Right ventricle myocardium superior (tissue), 1 donor: ENCODE measurements at regions of chr12 and their contacts with region 1.

Region 1: DNA sequence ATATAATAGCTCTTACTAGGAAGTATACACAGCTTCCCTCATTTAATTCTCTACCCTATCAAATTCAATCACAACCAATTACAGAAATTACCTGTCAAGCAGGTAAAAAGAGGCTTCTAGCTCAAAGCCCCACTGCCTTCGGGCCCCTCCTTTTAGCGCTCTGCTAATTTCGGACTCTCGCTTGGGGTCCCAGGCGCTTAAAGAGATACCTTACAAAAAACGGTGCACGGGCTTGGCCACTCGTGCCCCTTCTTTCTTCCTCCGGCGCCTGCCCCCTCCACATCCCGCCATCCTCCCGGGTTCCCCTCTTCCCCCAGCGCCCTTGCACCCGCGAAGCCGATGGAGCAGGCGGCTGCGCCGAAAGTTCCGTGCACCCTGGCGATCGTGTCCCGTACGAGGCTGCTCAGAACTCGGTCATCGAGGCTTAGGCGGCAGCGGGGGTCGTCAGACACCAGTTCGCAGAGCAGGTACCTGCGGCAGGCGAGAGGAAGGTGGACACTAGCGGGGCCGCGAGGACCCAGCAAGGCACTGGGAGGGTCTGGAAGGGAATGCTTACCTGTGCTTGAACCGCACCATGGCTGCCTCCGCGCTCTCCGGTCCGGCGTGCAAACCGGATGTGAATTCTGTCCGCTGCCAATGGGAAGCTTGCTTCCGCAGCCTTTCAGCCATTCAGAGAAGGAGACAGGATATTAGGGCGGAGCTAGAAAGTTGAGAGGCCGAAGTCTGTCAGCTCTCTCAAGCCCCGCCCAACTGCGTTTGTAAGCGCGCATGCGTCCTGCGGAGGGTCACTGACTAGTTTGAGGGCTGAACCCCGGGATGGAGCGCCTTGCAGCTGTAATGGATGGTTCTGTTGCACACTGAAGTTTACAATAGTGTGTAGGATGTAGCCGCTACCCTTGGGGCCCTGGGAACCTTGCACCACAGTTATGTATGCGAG is at the start of gene POP5:
- DNase-seq: peak; percentile 98
- ATAC-seq: peak; percentile 92
- total RNA-seq, gene POP5: 40.9 TPM

Region 2: GRCh38 chr12:120649442-120650232 is 68.6 kb after region 1 on chr12:
- intact Hi-C with region 1: loop called (anchors 5 kb)
- DNase-seq: peak; percentile 63
- ATAC-seq: peak; percentile 9

Region 3: DNA sequence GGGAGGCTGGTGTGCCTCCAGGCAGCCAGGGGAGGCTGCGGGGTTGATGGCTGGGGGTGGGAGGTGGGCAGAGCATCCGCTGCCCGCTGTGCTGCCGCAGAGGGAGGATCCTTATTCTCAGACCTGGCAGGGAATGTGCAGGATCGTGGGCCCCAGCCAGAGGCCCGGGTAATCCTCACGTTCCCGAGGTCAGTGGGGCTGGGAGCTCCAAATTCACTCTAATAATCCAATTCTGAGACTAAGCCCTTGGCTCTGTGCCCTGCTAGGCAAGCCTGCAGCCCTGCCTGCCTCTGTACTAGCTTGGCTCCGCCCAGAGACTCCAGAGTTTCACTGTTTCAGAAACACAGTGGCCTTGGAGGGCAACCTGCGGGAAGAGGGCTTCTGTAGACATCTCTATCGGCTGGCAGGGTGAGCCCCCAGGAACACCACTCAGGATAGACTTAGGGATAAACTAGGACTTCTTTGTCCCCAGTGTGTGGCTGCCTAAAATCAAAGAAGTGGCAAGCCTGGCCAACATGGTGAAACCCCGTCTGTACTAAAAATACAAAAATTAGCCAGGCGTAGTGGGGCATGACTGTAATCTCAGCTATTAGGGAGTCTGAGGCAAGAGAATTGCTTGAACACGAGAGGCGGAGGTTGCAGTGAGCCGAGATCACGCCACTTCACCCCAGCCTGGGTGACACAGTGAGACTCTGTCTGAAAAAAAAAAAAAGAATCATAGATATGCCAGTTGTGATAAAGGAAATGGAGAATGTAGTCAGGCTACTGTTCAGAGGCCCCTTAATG is 88.2 kb after region 1 on chr12:
- intact Hi-C with region 1: no loop called
- DNase-seq: peak; percentile 55
- ATAC-seq: peak; percentile 59

Region 4: GRCh38 chr12:120710031-120710804 is 129.2 kb after region 1 on chr12 and contains the start of gene UNC119B:
- intact Hi-C with region 1: loop called (anchors 2 kb)
- DNase-seq: peak; percentile 88
- ATAC-seq: peak; percentile 96
- total RNA-seq, gene UNC119B: 13.4 TPM

Region 5: DNA sequence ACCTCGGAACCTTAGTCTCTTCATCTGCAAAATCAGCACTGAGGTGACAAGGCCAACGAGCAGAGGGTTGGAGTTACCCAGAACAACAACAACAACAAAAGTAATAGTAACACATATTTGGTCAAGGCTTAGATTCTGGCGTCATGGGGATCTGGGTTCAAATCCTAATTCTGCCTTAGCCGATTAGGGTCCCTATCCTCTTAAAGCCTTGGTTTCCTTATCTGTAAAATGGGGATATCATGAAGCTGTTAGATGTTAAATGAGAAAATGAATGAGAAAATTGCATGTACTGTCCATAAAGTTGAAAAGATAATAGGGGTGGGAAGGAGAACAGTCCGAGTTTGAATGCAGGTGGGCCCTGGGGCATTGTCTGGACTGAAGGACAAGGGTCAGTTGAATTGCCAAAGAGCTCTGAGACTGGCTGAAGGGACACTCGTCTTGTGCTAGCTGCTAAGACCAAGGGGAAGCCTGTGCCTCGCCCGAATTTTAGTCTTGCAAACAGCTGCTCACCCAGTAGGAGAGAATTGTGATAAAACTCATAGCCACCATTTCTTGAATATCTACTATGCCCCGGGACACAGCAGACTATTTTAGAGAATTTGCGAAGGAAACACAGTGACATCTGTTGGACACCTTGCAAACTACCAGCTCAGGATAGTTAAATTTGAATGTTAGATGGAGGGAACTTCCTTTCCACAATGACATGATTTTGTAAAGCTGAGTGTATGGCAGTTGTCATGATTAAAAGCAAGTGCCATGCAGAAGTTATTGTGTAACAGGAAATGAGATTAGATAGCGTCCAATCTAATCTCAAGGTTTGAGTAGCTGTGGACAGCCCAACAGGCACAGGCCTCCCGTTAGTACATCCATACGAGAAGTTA is 390.5 kb after region 1 on chr12:
- intact Hi-C with region 1: loop called (anchors 5 kb)
- DNase-seq: no peak
- ATAC-seq: peak; percentile 86

Region 6: DNA sequence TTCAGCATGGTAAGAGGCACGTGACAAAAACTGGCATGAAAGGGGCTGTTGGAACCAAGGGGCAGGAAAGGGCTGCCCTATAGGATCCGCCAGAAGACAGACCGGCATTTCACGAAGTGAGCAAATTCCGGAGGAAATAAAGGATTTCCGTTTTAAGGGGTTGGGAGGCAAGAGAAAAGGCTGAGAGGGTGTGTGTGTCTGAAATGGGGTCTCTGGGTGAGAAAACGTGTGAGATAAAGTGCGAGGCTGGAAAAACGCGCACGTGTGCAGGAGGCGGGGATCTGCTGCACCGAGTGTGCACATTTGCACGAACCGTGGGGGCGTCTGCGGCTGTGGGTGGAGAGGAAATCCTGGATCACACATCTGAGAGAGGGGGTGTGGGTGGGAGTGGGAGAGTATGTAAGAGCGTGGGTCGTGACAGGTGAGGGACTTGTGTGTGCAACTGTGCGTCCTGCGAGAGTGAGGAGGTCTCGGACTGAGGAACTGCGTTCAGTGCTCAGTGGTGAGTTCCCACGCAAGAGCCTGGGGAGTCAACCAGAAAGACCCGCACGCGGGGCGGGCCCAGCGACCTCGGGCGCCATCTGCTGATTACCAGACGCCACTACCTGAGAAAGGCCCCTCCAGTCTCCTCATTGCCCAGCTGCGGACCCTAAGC is 514.6 kb after region 1 on chr12:
- intact Hi-C with region 1: loop called (anchors 10 kb)
- DNase-seq: peak; percentile 80
- ATAC-seq: peak; percentile 95